Activated CD8-positive, alpha-beta T cell treated with anti-CD3 and anti-CD28 coated beads for 36 hours (primary cell): ENCODE measurements at regions of chr22 and their contacts with region 1.

Region 1: DNA sequence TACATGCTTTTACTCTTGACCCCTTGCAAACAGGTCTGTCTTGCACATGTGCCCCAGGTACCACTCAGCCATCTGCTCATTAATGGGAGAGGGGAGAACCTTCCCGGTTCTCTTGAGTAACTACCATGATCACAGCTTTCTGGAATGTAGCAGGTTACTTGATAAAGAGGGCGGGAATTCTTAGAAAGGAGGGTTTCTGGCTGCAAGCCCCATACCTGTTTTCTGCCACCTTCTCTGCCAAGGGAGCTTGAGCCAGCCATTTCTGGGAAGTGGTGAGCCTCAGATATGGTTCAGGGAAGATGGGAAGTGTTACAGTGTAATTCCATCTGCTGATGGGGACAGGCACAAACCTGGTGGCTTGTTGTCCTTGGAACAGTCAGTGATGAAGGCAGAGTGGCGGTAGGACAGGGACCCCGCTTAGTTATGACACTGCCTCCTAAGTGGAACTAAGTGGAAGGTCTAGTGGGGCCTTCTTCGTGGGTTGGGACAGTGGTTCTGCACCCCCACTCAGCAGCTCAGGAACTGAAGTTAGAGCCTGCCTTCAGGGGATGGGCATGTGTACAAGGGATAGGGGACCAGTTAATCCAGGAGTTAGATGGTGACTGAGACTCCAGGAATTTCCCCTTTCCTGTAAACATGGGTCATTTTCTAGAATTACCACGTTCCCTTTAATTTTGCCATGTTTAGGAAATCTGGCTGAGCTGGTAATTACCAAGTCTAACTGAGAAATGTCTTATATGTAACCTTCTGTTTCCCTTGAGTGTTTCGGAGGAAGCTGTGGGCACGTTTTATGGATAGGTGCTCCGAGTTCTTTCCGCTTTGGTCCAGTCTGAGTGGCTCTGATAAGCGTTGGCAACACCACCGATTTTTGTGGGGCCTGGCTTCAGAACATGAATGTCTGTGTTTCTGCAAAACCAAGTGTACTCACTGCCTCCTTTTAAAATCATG is 35.3 kb downstream of the BCR start:
- DNase-seq: peak; percentile 33
- ATAC-seq: no peak
- H3K4me3 Mint-ChIP-seq: peak overlapping the region; percentile 66
- H3K27ac Mint-ChIP-seq: peak overlapping the region; percentile 95
- H3K4me1 Mint-ChIP-seq: peaks cover 73% of the 10 kb centered on the region
- H3K27me3 Mint-ChIP-seq: no peaks in the 10 kb centered on the region
- CTCF ChIP-seq: no peak

Region 2: DNA sequence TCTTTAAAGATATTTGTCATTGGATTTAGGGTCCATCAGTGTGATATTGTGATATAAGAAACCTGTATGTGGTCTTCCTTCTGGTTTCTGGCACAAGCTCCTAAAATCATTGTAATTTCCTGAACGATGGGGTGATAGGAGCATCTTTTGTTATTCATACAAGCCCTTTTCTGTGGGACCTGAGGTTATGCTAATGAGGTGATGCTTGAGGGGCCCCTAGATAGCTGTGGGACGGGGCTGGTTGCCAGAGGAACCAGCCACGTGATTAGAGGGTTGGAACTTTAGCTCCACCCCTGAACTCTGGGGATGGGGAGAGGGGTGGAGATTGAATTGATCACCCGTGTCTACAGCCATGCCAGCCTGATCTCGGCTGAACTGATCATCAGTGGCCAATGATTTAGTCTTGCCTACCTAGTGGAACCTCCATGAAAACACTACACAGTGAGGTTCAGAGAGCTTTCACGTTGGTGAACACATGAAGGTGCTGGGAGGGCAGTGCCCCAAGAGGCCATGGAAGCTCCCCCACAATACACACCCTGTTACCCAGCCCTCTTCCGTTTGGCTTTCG is 27.5 kb after region 1 on chr22:
- CTCF ChIA-PET with region 1: interaction called, 3 read pairs
- POLR2A ChIA-PET with region 1: interaction called, 12 read pairs
- intact Hi-C with region 1: no loop called
- DNase-seq: peak; percentile 87
- ATAC-seq: peak; percentile 96
- H3K4me3 Mint-ChIP-seq: peak overlapping the region; percentile 65
- H3K27ac Mint-ChIP-seq: peak overlapping the region; percentile 81
- H3K4me1 Mint-ChIP-seq: peaks cover 85% of the 10 kb centered on the region
- H3K27me3 Mint-ChIP-seq: no peaks in the 10 kb centered on the region
- CTCF ChIP-seq: no peak